ENCODE measurements at regions of chr19 and their contacts with region 1.

Region 1: DNA sequence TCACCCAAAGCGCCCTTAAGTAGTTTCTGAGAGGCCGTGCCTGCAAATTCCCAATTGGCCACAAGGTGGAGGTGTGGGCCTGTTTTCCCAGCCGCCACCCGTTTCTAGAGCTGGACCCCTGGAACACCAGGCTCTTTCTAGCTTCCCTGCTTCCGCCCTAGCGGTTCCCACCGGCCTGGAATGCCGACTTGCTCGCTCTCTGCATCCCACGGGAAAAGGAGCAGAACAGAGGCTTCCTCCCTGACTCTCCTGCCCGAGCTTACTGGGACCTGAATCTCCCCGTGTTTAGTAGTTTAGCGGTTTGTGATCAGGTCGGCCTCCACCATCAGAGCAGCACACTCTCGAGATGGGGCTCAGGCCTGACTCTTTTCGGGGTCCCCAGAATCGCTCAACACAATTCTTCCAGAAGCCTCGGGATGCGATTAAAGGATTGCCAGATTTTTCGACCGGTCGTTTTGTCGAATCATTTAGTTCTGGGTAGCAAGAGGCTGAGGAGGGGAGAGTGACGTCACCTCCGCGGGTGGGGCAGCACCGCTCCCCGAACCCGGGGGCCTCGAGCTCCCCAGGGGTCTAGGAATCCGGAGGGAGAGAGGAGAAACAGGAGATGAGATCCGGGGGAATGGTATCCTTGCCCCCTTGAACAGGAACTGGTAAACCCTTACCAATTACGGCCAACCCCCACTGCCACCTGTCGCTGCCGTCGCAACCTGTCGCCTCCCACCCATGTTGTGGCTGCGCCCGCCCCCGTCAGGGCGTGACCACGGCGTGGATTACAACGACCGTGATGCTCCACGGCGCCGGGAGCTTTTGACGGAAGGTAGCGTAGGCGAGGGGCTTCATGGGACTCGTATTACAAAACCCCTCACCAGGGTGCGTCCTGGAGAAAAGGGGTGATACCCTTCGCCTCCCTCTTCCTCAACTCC is 8.0 kb downstream of the NAPSA start:
- DNase-seq: peak; percentile 93
- ATAC-seq: peak; percentile 89
- H3K4me3 Mint-ChIP-seq: peak overlapping the region; percentile 83
- H3K27ac Mint-ChIP-seq: peak overlapping the region; percentile 98
- H3K4me1 Mint-ChIP-seq: peaks cover 39% of the 10 kb centered on the region
- H3K27me3 Mint-ChIP-seq: no peaks in the 10 kb centered on the region

Region 2: DNA sequence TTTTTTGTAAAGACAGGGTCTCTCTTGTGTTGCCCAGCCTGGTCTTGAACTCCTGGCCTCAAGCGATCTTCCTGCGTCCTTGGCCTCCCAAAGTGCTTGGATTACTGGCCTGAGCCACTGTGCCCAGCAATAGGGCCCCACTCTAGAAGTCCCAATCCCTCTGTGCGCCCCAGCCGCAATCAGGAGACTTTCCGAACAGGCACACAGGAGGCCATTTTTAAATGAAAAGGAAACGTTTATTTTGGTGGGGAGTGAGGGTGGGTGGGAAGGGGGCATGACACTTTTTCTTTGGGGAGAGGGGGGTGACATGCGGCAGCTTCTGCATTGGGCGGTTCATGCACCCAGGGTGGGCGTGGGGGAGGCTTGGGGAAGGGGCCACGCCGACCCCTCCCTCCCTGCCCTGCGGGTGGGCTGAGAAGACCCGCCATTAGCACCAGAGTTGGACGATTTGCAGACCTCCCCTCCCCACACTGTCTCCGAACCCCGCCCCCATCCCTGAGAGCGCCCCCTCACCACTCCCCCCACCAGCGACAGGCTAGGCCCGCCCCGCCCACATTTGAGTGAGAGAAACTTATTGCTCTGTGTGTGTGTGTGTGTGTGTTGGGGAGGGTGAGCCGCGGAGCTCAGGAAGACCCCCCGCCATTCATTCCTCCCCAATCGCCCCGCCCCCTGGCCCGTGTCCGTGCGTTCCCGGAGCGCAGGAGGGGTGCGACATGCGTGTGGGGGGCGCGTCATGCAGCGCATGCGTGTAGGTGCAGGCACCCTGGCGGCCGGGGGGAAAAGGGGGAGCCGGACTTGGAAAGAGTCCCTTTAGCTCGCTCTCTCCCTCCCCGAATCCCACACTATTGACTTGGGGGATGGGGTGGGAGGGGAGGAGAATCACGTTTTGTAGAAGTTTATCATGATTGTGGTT is 45.5 kb before region 1 on chr19:
- CTCF ChIA-PET with region 1: no interaction called
- DNase-seq: no peak
- ATAC-seq: no peak
- H3K4me3 Mint-ChIP-seq: no peak overlapping the region
- H3K27ac Mint-ChIP-seq: no peak overlapping the region
- H3K4me1 Mint-ChIP-seq: peaks cover 4% of the 10 kb centered on the region
- H3K27me3 Mint-ChIP-seq: peaks cover 58% of the 10 kb centered on the region

Region 3: GRCh38 chr19:50344661-50345318 is 12.6 kb before region 1 on chr19:
- CTCF ChIA-PET with region 1: interaction called, 22 read pairs
- DNase-seq: no peak
- ATAC-seq: no peak
- H3K4me3 Mint-ChIP-seq: no peak overlapping the region
- H3K27ac Mint-ChIP-seq: peak overlapping the region; percentile 46
- H3K4me1 Mint-ChIP-seq: peaks cover 30% of the 10 kb centered on the region
- H3K27me3 Mint-ChIP-seq: no peaks in the 10 kb centered on the region

Region 4: GRCh38 chr19:50376166-50377050 is 19.0 kb after region 1 on chr19 and contains the start of gene NR1H2:
- CTCF ChIA-PET with region 1: interaction called, 64 read pairs
- DNase-seq: peak; percentile 97
- ATAC-seq: peak; percentile 93
- H3K4me3 Mint-ChIP-seq: peak within 1 kb of the TSS; percentile 95
- H3K27ac Mint-ChIP-seq: peak within 1 kb of the TSS; percentile 99
- H3K4me1 Mint-ChIP-seq: peaks cover 20% of the 10 kb centered on the region
- H3K27me3 Mint-ChIP-seq: no peaks in the 10 kb centered on the region
- total RNA-seq, gene NR1H2: 62.2 to 69.8 TPM

Region 5: DNA sequence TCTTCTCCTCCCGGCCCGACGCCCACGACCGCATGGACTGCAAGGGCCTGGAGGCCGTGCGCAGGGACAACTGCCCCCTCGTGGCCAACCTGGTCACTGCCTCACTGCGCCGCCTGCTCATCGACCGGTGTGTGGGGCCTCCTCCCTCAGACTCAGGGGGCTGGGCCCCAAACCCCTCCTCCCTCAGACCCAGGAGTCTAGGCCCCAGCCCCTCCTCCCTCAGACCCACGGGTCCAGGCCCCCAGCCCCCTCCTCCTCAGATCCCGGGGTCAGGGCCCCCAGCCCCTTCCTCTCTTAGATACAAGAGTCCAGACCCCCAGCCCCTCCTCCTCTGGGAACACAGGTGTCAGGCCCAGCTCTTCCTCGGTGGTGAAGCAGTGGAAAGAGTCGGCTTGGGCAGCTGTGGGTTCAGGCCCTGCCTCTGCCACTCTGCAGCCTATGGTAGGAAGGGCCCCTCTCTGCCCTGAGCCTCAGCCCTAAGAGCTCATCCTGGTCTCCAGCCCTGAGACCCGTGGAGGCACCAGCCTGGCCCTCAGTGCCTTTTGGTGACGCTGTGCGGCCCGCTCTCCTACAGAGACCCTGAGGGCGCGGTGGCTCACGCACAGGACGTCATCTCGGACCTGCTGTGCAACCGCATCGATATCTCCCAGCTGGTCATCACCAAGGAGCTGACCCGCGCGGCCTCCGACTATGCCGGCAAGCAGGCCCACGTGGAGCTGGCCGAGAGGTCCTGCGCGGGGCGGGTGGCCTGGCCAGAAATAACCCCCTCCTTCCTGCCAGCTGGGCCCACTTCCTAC is 57.6 kb after region 1 on chr19:
- CTCF ChIA-PET with region 1: interaction called, 14 read pairs
- DNase-seq: peak; percentile 75
- ATAC-seq: peak; percentile 79
- H3K4me3 Mint-ChIP-seq: no peak overlapping the region
- H3K27ac Mint-ChIP-seq: peak overlapping the region; percentile 15
- H3K4me1 Mint-ChIP-seq: peaks cover 9% of the 10 kb centered on the region
- H3K27me3 Mint-ChIP-seq: peaks cover 12% of the 10 kb centered on the region

Region 6: GRCh38 chr19:50425581-50425980 is 68.1 kb after region 1 on chr19:
- CTCF ChIA-PET with region 1: no interaction called
- DNase-seq: no peak
- ATAC-seq: no peak
- H3K4me3 Mint-ChIP-seq: no peak overlapping the region
- H3K27ac Mint-ChIP-seq: no peak overlapping the region
- H3K4me1 Mint-ChIP-seq: no peaks in the 10 kb centered on the region
- H3K27me3 Mint-ChIP-seq: peaks cover 9% of the 10 kb centered on the region

Region 7: GRCh38 chr19:50511068-50511822 is 153.8 kb after region 1 on chr19 and contains the start of gene JOSD2:
- CTCF ChIA-PET with region 1: interaction called, 13 read pairs
- DNase-seq: peak; percentile 99
- ATAC-seq: peak; percentile 95
- H3K4me3 Mint-ChIP-seq: peak within 1 kb of the TSS; percentile 93
- H3K27ac Mint-ChIP-seq: peak within 1 kb of the TSS; percentile 89
- H3K4me1 Mint-ChIP-seq: peaks cover 15% of the 10 kb centered on the region
- H3K27me3 Mint-ChIP-seq: peaks cover 9% of the 10 kb centered on the region
- total RNA-seq, gene JOSD2: 40.2 to 41.7 TPM

Measured in activated CD8-positive, alpha-beta memory T cell treated with anti-CD3 and anti-CD28 coated beads, Interleukin-2, amount 10 ng/mL, durations not matched to agents 7 days and 5 days (primary cell).